BJ (cell line): ENCODE measurements at regions of chr10 and their contacts with region 1.

Region 1: DNA sequence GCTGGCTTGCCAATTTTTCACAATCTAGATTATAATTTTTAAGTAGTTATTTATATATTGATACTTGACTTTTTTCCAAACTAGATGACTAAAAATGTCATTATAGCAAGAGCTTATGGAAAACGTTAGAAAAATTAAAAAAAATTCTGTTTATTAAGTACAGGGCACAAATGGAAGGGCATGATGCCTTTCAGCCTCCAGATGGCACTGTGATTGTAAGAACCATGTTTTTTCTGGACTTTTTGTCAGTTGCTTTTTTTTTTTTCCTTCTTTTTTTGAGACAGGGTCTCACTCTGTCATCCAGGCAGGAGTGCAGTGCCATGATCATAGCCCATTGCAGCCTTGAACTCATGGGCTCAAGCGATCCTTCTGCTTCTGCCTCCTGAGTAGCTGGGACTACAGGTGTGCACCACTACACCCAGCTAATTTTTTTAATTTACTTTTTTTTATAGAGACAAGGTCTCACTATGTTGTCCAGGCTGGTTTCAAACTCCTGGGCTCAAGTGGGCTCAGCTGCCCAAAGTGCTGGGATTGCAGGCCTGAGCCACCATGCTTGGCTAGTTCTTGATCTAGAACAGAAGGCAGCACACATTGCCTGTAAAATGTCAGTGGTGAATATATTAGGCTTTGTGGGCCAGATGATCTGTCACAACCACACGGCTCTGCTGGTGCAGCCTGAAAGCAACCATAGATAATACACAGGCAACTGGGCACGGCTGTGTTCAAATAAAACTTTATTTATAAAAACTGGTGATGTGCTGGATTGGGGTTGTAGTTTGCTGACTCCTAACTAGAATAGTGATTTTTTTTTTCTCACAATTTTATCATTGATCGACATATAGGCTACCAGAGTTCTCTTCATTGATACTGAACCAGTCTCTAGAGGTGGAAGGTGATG is 27.4 kb downstream of the UCMA start:
- DNase-seq: no peak
- H3K4me3 ChIP-seq: no peak overlapping the region
- H3K27me3 ChIP-seq: no peaks in the 10 kb centered on the region
- CTCF ChIP-seq: peak; percentile 57

Region 2: GRCh38 chr10:12484941-12485805 is 721.6 kb before region 1 on chr10:
- CTCF ChIA-PET with region 1: no interaction called
- POLR2A ChIA-PET with region 1: no interaction called
- DNase-seq: no peak
- H3K4me3 ChIP-seq: no peak overlapping the region
- H3K27me3 ChIP-seq: no peaks in the 10 kb centered on the region
- CTCF ChIP-seq: no peak

Region 3: DNA sequence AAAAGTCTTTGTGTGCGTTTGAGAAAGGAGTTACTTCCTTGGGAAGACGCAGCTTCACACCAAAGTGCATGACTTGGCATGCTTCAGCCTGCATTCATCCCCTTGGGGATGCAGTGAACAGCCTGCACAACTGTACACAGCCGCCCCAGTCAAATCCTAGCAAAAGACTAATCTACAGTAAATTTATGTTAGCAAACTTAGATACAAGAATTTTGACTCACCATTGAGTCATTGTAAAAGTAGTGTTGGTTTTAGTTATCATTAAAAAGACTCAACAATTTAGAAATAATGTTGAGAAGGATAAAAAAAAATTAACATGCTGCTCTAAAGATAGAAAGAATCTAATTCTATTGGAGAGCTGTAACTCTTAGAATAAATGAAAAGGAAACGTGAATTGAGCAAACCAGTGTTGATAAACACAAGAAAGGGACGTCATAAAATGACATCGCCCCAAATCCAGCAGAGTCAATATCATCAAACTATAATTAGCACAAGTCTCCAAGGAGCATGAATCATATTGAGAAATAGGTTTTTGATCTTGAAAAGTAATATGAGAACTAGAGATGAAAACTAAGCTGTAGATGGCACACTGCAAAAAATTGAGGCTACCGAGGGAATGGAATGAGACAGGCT is 118.7 kb before region 1 on chr10:
- CTCF ChIA-PET with region 1: no interaction called
- POLR2A ChIA-PET with region 1: no interaction called
- DNase-seq: peak; percentile 55
- H3K4me3 ChIP-seq: no peak overlapping the region
- H3K27me3 ChIP-seq: no peaks in the 10 kb centered on the region
- CTCF ChIP-seq: no peak

Region 4: GRCh38 chr10:13299437-13300287 is 92.9 kb after region 1 on chr10 and contains the start of gene PHYH:
- CTCF ChIA-PET with region 1: interaction called, 13 read pairs
- POLR2A ChIA-PET with region 1: interaction called, 3 read pairs
- DNase-seq: no peak
- H3K4me3 ChIP-seq: peak within 1 kb of the TSS; percentile 65
- H3K27me3 ChIP-seq: no peaks in the 10 kb centered on the region
- CTCF ChIP-seq: no peak
- polyA plus RNA-seq, gene PHYH: 7.1 and 11.0 TPM in 2 replicates

Region 5: GRCh38 chr10:13518076-13518692 is 311.4 kb after region 1 on chr10:
- CTCF ChIA-PET with region 1: no interaction called
- POLR2A ChIA-PET with region 1: no interaction called
- DNase-seq: no peak
- H3K4me3 ChIP-seq: no peak overlapping the region
- H3K27me3 ChIP-seq: no peaks in the 10 kb centered on the region
- CTCF ChIP-seq: peak; percentile 40

Region 6: GRCh38 chr10:13536674-13537366 is 330.0 kb after region 1 on chr10:
- CTCF ChIA-PET with region 1: interaction called, 10 read pairs
- POLR2A ChIA-PET with region 1: no interaction called
- DNase-seq: no peak
- H3K4me3 ChIP-seq: no peak overlapping the region
- H3K27me3 ChIP-seq: peaks cover 8% of the 10 kb centered on the region
- CTCF ChIP-seq: peak; percentile 75